ENCODE measurements at regions of chr13 and their contacts with region 1.

Region 1: GRCh38 chr13:45332036-45332830 is 8.8 kb downstream of the TPT1 start:
- DNase-seq: no peak
- ATAC-seq: peak; percentile 35 to 40
- H3K4me3 ChIP-seq: no peak overlapping the region
- H3K27ac ChIP-seq: peak overlapping the region; percentile 63 to 74 (median 66)
- H3K4me1 ChIP-seq: peaks cover 74 to 79% of the 10 kb centered on the region in 2 donors
- H3K27me3 ChIP-seq: no peaks in the 10 kb centered on the region
- CTCF ChIP-seq: no peak
- POLR2A ChIP-seq: no peak

Region 2: DNA sequence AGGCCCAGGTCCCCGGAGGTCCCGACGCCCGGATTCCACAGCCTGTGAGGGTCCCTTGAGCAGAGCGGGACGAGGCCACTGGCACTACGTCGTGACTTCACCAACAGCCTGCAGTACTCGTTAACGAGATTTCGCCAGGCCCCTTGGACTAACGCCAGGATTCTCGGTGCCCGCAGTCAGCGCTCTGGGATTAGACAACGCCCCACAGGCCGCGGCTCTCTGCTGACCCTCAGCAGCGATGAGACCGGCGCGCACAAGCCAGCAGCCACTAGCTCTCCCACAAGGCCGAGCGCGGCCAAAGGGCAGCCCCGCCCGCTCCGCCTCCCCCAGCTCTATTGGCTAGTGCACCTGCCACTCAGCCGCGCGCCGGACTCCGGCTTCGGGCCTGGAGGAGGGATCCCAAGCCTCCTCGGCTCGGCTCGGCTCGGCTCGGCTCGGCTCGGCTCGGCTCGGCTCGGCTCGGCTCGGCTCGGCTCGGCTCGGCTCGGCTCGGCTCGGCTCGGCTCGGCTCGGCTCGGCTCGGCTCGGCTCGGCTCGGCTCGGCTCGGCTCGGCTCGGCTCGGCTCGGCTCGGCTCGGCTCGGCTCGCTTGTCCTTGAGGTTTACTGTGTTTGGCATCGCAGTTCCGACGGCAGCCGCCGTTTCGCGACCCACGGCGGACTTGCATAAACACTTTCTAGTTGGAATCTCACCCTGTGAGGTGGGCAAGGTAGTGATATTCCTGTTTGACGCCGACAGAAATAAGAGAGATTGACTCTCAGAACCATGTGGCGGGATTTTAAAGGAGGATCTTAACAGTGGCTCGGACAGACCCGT is 1190.3 kb before region 1 on chr13:
- in situ Hi-C with region 1: no loop called
- intact Hi-C with region 1: loop called (anchors 10 kb)
- DNase-seq: peak; percentile 96 to 98
- ATAC-seq: peak; percentile 87 to 89
- H3K4me3 ChIP-seq: peak overlapping the region; percentile 54 to 72 (median 68)
- H3K27ac ChIP-seq: peak overlapping the region; percentile 92 to 98 (median 96)
- H3K4me1 ChIP-seq: peaks cover 9 to 21% of the 10 kb centered on the region in 2 donors
- H3K27me3 ChIP-seq: no peaks in the 10 kb centered on the region
- CTCF ChIP-seq: peak; percentile 23 to 31 (median 26)
- POLR2A ChIP-seq: peak; percentile 84 to 94

Region 3: DNA sequence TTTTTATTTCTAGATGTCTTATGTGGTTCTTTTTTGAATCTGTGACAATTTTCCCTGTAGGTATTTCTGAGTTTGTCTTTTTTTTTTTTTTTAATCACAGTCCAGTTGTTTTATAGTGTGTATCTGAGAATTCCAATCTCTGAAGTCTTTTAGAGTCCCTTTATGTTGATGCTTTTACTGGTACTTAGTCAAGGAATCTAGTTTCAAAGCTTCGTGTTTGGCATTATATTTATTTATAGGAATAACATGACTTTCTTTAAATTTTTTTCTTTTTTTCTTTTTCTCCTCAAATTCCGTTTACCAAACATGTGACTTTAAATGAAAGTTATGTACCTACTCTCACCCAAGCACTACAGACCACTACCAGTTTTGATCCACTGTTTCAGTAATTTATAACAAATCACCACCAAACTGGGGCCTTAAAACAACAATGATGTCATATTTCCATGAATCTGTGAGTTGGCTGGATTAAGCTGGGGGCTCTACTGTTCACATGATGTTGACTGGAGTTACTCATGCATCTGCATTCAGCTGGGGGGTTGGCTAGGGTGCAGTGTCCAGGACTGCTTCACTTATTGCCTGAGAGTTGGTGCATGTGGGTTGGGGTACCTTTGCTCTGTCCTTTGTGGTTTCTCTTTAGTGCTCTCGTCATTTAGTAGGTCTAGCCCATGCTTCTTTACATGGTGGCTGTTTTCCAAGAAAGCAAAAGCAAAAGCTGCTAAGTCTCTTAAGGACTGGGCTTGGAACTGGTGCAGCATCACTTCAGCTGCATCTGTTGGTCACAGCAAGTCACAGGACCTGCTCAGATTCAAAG is 153.7 kb before region 1 on chr13:
- in situ Hi-C with region 1: no loop called
- intact Hi-C with region 1: no loop called
- DNase-seq: no peak
- ATAC-seq: no peak
- H3K4me3 ChIP-seq: no peak overlapping the region
- H3K27ac ChIP-seq: no peak overlapping the region
- H3K4me1 ChIP-seq: no peaks in the 10 kb centered on the region
- H3K27me3 ChIP-seq: no peaks in the 10 kb centered on the region
- CTCF ChIP-seq: no peak
- POLR2A ChIP-seq: no peak

Measured in gastrocnemius medialis (tissue), 4 donors.